ENCODE measurements at regions of chr3 and their contacts with region 1.

Region 1: GRCh38 chr3:50260027-50260941 is 8.7 kb upstream of the SEMA3B start:
- DNase-seq: peak; percentile 97
- H3K4me3 ChIP-seq: peak overlapping the region; percentile 53 to 73 (median 67)
- H3K27ac ChIP-seq: peak overlapping the region; percentile 93 to 99 (median 99)
- H3K4me1 ChIP-seq: peaks cover 4 to 52% (median 39%) of the 10 kb centered on the region in 4 donors
- H3K27me3 ChIP-seq: no peaks in the 10 kb centered on the region
- CTCF ChIP-seq: peak; percentile 92 to 99 (median 96)
- EP300 ChIP-seq: no peak
- POLR2A ChIP-seq: peak in 1 of 2 donors; percentile 30

Region 2: GRCh38 chr3:50272911-50273693 is 12.8 kb after region 1 on chr3:
- intact Hi-C with region 1: loop called (anchors 1 kb)
- DNase-seq: peak; percentile 92
- H3K4me3 ChIP-seq: peak overlapping the region in 3 of 4 donors; percentile 31 to 45 (median 35)
- H3K27ac ChIP-seq: peak overlapping the region in 3 of 4 donors; percentile 48 to 99 (median 65)
- H3K4me1 ChIP-seq: peaks cover 0 to 43% (median 36%) of the 10 kb centered on the region in 4 donors
- H3K27me3 ChIP-seq: peaks cover 0 to 21% (median 0%) of the 10 kb centered on the region in 3 donors
- CTCF ChIP-seq: peak; percentile 97 to 99 (median 99)
- EP300 ChIP-seq: no peak
- POLR2A ChIP-seq: no peak

Region 3: GRCh38 chr3:50298836-50299637 is 38.8 kb after region 1 on chr3 and contains the starts of genes HYAL3 and NAA80:
- intact Hi-C with region 1: no loop called
- DNase-seq: peak; percentile 100
- H3K4me3 ChIP-seq: peak within 1 kb of the TSS; percentile 60 to 69 (median 63)
- H3K27ac ChIP-seq: peak within 1 kb of the TSS; percentile 88 to 89 (median 88)
- H3K4me1 ChIP-seq: peaks cover 4 to 45% (median 40%) of the 10 kb centered on the region in 4 donors
- H3K27me3 ChIP-seq: no peaks in the 10 kb centered on the region
- CTCF ChIP-seq: peak; percentile 28 to 58 (median 44)
- EP300 ChIP-seq: no peak
- POLR2A ChIP-seq: peak; percentile 83 to 96
- total RNA-seq, gene HYAL3: 2.1 to 8.3 (median 3.4) TPM
- total RNA-seq, gene NAA80: 3.6 to 9.4 (median 7.6) TPM

Region 4: DNA sequence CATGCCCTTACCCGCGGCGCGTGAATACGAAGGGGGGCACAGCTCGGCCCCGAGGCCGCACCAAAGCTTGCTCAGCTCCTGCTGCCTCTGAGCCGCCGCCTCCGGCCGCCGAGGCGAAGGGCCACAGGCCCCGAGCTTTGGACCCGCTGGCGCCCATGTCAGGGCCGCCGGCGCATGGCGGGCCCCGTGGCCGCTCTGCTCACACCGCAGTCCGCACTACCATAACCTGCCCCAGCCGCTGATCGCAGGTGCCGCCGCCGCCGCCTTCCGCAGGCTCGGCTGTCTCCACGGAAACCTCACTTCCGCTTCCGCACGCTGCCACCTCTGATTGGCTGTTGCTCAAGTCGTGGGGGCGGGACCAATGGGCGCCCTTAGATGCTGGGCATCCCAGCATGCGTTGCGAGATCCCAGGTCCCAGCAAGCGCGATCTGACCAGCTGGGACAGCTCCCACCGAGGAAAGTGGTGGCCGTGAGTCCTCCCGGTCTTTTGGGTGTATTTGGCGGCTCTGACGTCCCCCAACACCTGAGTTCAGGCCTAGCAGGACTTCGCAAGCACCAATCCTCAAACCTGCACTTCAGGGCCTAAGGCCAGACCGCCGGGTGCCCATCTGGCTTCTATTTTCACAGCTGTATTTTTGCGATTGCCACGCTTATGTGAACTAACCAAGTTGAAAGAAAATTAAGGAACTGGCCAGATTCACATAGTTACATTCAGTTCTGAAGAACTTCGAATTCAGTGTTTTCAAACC is 67.8 kb after region 1 on chr3 and contains the start of gene TUSC2:
- intact Hi-C with region 1: loop called (anchors 5 kb)
- DNase-seq: peak; percentile 99
- H3K4me3 ChIP-seq: peak within 1 kb of the TSS; percentile 75 to 100 (median 92)
- H3K27ac ChIP-seq: peak within 1 kb of the TSS; percentile 82 to 97 (median 86)
- H3K4me1 ChIP-seq: peaks cover 0 to 39% (median 30%) of the 10 kb centered on the region in 4 donors
- H3K27me3 ChIP-seq: no peaks in the 10 kb centered on the region
- CTCF ChIP-seq: no peak
- EP300 ChIP-seq: no peak
- POLR2A ChIP-seq: peak; percentile 67 to 76
- total RNA-seq, gene TUSC2: 23.2 to 54.7 (median 38.0) TPM

Region 5: GRCh38 chr3:50587806-50588758 is 327.8 kb after region 1 on chr3:
- intact Hi-C with region 1: no loop called
- DNase-seq: no peak
- H3K4me3 ChIP-seq: no peak overlapping the region
- H3K27ac ChIP-seq: no peak overlapping the region
- H3K4me1 ChIP-seq: peaks cover 0 to 12% (median 6%) of the 10 kb centered on the region in 4 donors
- H3K27me3 ChIP-seq: no peaks in the 10 kb centered on the region
- CTCF ChIP-seq: no peak
- EP300 ChIP-seq: no peak
- POLR2A ChIP-seq: no peak

Measured in sigmoid colon (tissue), 7 donors.